ENCODE measurements at regions of chr2 and their contacts with region 1.

Region 1: GRCh38 chr2:19362755-19363473 is 4.5 kb upstream of the OSR1 start:
- DNase-seq: peak; percentile 93
- H3K4me3 ChIP-seq: peak overlapping the region; percentile 38 to 61 (median 54)
- H3K27ac ChIP-seq: peak overlapping the region; percentile 58 to 94 (median 76)
- H3K4me1 ChIP-seq: peaks cover 0 to 43% (median 22%) of the 10 kb centered on the region in 4 donors
- H3K27me3 ChIP-seq: peaks cover 0 to 44% (median 0%) of the 10 kb centered on the region in 3 donors
- CTCF ChIP-seq: peak; percentile 26 to 84 (median 76)
- EP300 ChIP-seq: no peak
- POLR2A ChIP-seq: no peak

Region 2: GRCh38 chr2:18435421-18436037 is 927.4 kb before region 1 on chr2:
- intact Hi-C with region 1: loop called (anchors 5 kb)
- DNase-seq: no peak
- H3K4me3 ChIP-seq: no peak overlapping the region
- H3K27ac ChIP-seq: peak overlapping the region in 2 of 4 donors; percentile 23 to 28
- H3K4me1 ChIP-seq: peaks cover 0 to 37% (median 23%) of the 10 kb centered on the region in 4 donors
- H3K27me3 ChIP-seq: no peaks in the 10 kb centered on the region
- CTCF ChIP-seq: peak in 3 of 4 experiments; percentile 14 to 53 (median 22)
- EP300 ChIP-seq: no peak
- POLR2A ChIP-seq: no peak

Region 3: GRCh38 chr2:18560031-18560796 is 802.7 kb before region 1 on chr2 and contains the start of gene RDH14:
- intact Hi-C with region 1: loop called (anchors 2 kb)
- DNase-seq: peak; percentile 98
- H3K4me3 ChIP-seq: peak within 1 kb of the TSS; percentile 73 to 88 (median 78)
- H3K27ac ChIP-seq: peak within 1 kb of the TSS; percentile 95 to 99 (median 96)
- H3K4me1 ChIP-seq: peaks cover 0 to 32% (median 21%) of the 10 kb centered on the region in 4 donors
- H3K27me3 ChIP-seq: no peaks in the 10 kb centered on the region
- CTCF ChIP-seq: no peak
- EP300 ChIP-seq: no peak
- POLR2A ChIP-seq: peak; percentile 42 to 53
- total RNA-seq, gene RDH14: 37.5 to 45.7 (median 39.9) TPM

Region 4: GRCh38 chr2:18889565-18890332 is 473.2 kb before region 1 on chr2:
- intact Hi-C with region 1: loop called (anchors 5 kb)
- DNase-seq: peak; percentile 70
- H3K4me3 ChIP-seq: no peak overlapping the region
- H3K27ac ChIP-seq: peak overlapping the region; percentile 16 to 82 (median 76)
- H3K4me1 ChIP-seq: peaks cover 2 to 21% (median 18%) of the 10 kb centered on the region in 4 donors
- H3K27me3 ChIP-seq: no peaks in the 10 kb centered on the region
- CTCF ChIP-seq: no peak
- EP300 ChIP-seq: peak; percentile 74 to 91 (median 78)
- POLR2A ChIP-seq: no peak

Region 5: GRCh38 chr2:19347619-19348562 is 15.0 kb before region 1 on chr2:
- intact Hi-C with region 1: no loop called
- DNase-seq: peak; percentile 99
- H3K4me3 ChIP-seq: peak overlapping the region; percentile 62 to 92 (median 78)
- H3K27ac ChIP-seq: peak overlapping the region; percentile 86 to 96 (median 93)
- H3K4me1 ChIP-seq: peaks cover 0 to 27% (median 25%) of the 10 kb centered on the region in 4 donors
- H3K27me3 ChIP-seq: peaks cover 0 to 21% (median 0%) of the 10 kb centered on the region in 3 donors
- CTCF ChIP-seq: no peak
- EP300 ChIP-seq: peak in 1 of 4 donors; percentile 75
- POLR2A ChIP-seq: peak; percentile 97

Region 6: GRCh38 chr2:19863303-19864041 is 500.6 kb after region 1 on chr2:
- intact Hi-C with region 1: loop called (anchors 1 kb)
- DNase-seq: peak; percentile 82
- H3K4me3 ChIP-seq: peak overlapping the region in 1 of 4 donors; percentile 5
- H3K27ac ChIP-seq: no peak overlapping the region
- H3K4me1 ChIP-seq: peaks cover 0 to 23% (median 9%) of the 10 kb centered on the region in 4 donors
- H3K27me3 ChIP-seq: peaks cover 0 to 8% (median 0%) of the 10 kb centered on the region in 3 donors
- CTCF ChIP-seq: peak; percentile 93 to 98 (median 96)
- EP300 ChIP-seq: no peak
- POLR2A ChIP-seq: no peak